Psoas muscle (tissue), 8 donors: ENCODE measurements at regions of chr2 and their contacts with region 1.

Region 1: DNA sequence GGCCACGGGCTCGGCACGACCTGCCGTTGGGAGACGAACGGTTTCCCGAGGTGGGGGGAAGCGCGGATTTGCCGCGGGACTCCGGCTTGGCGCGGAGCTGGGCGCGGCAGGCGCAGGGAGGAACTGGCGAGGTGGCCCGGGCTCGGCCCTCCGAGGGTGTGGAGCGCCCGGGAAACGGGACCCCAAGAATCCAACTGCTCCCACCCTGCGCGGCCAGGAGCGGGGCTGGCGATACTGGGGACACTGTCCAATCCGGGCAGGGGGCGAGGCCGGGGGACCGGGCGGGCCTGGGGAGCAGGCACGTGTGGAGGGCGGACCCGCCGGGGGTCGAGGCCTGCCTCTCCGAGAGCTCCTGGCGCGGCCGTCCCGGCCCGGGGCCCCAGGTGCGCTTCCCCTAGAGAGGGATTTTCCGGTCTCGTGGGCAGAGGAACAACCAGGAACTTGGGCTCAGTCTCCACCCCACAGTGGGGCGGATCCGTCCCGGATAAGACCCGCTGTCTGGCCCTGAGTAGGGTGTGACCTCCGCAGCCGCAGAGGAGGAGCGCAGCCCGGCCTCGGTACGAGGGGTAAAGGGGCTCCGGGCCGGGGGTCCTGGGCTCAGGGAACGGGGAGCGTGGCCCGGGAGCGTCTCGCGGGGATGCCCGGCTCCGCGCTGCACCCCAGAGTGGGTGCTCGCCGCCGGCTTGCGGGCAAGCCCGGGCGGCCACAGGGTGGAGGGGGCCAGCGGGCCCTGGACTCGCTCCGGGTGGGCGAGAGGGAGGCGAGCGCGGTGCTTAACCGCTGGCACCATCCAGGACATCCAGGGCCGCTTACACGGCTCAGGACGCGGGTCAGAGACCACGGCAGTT is at the start of gene ANXA4:
- DNase-seq: peak; percentile 78 to 88
- ATAC-seq: peak; percentile 87 to 90 (median 88)
- H3K4me3 ChIP-seq: peak within 1 kb of the TSS; percentile 72
- H3K27ac ChIP-seq: peak within 1 kb of the TSS; percentile 88
- H3K4me1 ChIP-seq: peaks cover 11% of the 10 kb centered on the region
- H3K27me3 ChIP-seq: no peaks in the 10 kb centered on the region
- CTCF ChIP-seq: no peak
- total RNA-seq, gene ANXA4: 19.4 to 29.0 (median 23.4) TPM

Region 2: DNA sequence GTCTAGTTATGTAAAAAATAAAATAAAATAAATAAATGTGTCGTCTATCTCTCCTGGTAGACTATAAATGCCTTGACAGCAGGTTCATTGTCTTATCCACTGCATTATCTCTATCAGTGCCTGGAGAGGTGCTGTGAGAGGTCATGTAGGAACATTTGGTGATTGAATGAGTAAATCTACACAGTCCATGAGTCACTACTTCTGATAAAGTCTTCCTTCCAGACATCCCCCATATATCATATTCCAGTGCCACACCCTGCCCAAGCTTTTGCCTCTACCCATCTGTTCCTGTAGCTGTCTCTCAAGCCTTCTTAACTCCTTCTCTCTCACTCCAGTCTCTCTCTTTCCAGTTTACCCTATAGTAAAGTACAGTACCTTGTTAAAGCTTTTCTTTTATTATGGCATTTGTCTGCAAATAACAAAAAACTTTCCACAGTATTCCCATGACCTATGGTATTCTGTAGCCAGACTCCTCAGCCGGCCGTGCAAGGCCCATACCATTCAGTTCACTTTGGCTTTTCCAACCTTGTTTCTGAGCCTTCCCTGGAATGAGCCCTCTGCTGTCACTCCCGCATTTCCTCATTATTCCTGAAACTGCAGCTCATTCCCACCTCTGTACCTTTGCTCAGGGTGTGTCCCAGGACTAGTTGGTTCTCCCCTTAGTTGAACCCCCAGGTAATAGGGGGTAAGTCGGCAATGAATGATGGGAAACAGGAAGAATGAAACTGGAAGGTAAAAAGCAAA is 37.6 kb after region 1 on chr2:
- intact Hi-C with region 1: loop called (anchors 5 kb)
- DNase-seq: no peak
- ATAC-seq: peak; percentile 70 to 89 (median 86)
- H3K4me3 ChIP-seq: no peak overlapping the region
- H3K27ac ChIP-seq: peak overlapping the region; percentile 47
- H3K4me1 ChIP-seq: peaks cover 28% of the 10 kb centered on the region
- H3K27me3 ChIP-seq: no peaks in the 10 kb centered on the region
- CTCF ChIP-seq: no peak

Region 3: GRCh38 chr2:69811018-69811417 is 69.2 kb after region 1 on chr2:
- intact Hi-C with region 1: loop called in 1 of 2 experiments (anchors 5 kb)
- DNase-seq: no peak
- ATAC-seq: no peak
- H3K4me3 ChIP-seq: no peak overlapping the region
- H3K27ac ChIP-seq: no peak overlapping the region
- H3K4me1 ChIP-seq: no peaks in the 10 kb centered on the region
- H3K27me3 ChIP-seq: no peaks in the 10 kb centered on the region
- CTCF ChIP-seq: no peak